Calu3 (cell line): ENCODE measurements at regions of chr3 and their contacts with region 1.

Region 1: DNA sequence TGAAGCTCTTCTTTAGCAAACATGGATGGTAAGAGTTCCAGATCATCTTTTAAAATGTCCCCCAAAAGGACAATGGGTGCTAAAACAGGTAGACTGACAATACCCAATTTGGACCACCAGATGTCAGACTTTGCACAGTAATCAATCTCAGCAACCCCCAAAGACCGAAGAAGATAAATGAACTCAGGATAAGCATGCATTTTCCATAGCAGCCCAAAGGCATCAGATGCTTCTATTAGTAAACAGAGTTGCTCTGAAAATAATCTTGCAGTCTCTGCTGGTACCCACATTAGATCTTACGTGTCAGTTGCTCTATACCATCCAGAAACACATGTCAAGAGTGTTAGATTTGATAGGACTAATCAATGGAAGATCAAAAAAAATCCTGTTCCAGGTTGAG is 20.6 kb downstream of the MYH15 start:
- DNase-seq: peak; percentile 18
- H3K4me3 Mint-ChIP-seq: no peak overlapping the region
- H3K27ac Mint-ChIP-seq: no peak overlapping the region
- H3K4me1 Mint-ChIP-seq: no peaks in the 10 kb centered on the region
- H3K27me3 Mint-ChIP-seq: no peaks in the 10 kb centered on the region
- CTCF ChIP-seq: peak; percentile 62

Region 2: GRCh38 chr3:108552267-108553159 is 62.7 kb after region 1 on chr3:
- CTCF ChIA-PET with region 1: interaction called, 5 read pairs
- intact Hi-C with region 1: loop called (anchors 1 kb)
- DNase-seq: no peak
- H3K4me3 Mint-ChIP-seq: no peak overlapping the region
- H3K27ac Mint-ChIP-seq: no peak overlapping the region
- H3K4me1 Mint-ChIP-seq: peaks cover 23% of the 10 kb centered on the region
- H3K27me3 Mint-ChIP-seq: no peaks in the 10 kb centered on the region
- CTCF ChIP-seq: no peak

Region 3: GRCh38 chr3:108818404-108818803 is 328.6 kb after region 1 on chr3:
- CTCF ChIA-PET with region 1: no interaction called
- intact Hi-C with region 1: loop called (anchors 5 kb)
- DNase-seq: peak; percentile 53
- H3K4me3 Mint-ChIP-seq: no peak overlapping the region
- H3K27ac Mint-ChIP-seq: no peak overlapping the region
- H3K4me1 Mint-ChIP-seq: peaks cover 7% of the 10 kb centered on the region
- H3K27me3 Mint-ChIP-seq: no peaks in the 10 kb centered on the region
- CTCF ChIP-seq: peak; percentile 15

Region 4: DNA sequence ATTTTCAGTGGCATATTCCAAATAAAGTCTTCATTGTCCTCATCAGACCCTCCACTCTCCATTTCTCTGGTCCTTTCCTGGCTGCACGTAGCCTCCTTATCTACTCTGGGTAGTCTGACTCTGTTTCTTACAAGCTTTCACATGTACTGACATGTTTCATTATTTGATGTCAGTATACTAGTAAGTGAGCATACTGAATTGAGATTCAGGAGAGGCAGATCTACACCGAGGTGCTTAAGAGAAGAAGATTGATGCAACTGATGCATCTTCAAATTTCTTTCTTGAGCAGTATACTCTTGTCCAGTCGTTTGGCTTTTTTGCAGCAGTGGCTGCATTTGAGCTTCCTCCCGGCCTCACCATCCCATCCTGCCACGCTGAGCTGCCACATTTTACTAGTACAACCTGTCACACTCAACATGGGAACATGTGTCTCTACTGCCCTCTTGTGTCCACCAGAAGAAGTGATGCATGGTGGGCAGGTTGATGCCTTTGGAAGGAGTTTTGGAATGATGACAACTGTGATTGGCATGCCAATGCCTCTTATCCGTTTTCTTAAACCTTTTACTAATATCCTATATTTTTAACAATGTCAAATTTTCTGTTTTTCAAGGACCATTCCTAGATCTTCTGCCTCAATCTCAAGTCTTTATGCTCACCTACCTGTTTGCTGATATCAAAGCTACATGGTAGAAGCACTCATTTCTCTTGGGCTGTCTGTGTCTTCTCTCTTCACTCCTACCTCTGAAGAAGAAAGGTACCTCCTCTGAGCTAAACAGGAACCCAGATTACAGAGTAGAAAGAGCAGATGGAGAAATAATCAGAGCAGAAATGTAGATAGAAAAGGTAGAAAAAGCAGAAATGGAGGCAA is 425.2 kb after region 1 on chr3:
- CTCF ChIA-PET with region 1: no interaction called
- intact Hi-C with region 1: loop called (anchors 2 kb)
- DNase-seq: peak; percentile 60
- H3K4me3 Mint-ChIP-seq: no peak overlapping the region
- H3K27ac Mint-ChIP-seq: no peak overlapping the region
- H3K4me1 Mint-ChIP-seq: peaks cover 31% of the 10 kb centered on the region
- H3K27me3 Mint-ChIP-seq: peaks cover 10% of the 10 kb centered on the region
- CTCF ChIP-seq: peak; percentile 67